HEK293 (cell line): ENCODE measurements at regions of chr2 and their contacts with region 1.

Region 1: GRCh38 chr2:15748736-15749323 is 157.2 kb downstream of the DDX1 start:
- H3K4me3 ChIP-seq: no peak overlapping the region
- H3K27ac ChIP-seq: no peak overlapping the region
- H3K4me1 ChIP-seq: no peaks in the 10 kb centered on the region
- CTCF ChIP-seq: 0 out of 2 replicates have a peak, but pooled peaks have one; percentile 31

Region 2: GRCh38 chr2:15642011-15642814 is 106.6 kb before region 1 on chr2:
- CTCF ChIA-PET with region 1: interaction called, 15 read pairs
- POLR2A ChIA-PET with region 1: no interaction called
- H3K4me3 ChIP-seq: no peak overlapping the region
- H3K27ac ChIP-seq: no peak overlapping the region
- H3K4me1 ChIP-seq: no peaks in the 10 kb centered on the region
- CTCF ChIP-seq: no peak

Region 3: DNA sequence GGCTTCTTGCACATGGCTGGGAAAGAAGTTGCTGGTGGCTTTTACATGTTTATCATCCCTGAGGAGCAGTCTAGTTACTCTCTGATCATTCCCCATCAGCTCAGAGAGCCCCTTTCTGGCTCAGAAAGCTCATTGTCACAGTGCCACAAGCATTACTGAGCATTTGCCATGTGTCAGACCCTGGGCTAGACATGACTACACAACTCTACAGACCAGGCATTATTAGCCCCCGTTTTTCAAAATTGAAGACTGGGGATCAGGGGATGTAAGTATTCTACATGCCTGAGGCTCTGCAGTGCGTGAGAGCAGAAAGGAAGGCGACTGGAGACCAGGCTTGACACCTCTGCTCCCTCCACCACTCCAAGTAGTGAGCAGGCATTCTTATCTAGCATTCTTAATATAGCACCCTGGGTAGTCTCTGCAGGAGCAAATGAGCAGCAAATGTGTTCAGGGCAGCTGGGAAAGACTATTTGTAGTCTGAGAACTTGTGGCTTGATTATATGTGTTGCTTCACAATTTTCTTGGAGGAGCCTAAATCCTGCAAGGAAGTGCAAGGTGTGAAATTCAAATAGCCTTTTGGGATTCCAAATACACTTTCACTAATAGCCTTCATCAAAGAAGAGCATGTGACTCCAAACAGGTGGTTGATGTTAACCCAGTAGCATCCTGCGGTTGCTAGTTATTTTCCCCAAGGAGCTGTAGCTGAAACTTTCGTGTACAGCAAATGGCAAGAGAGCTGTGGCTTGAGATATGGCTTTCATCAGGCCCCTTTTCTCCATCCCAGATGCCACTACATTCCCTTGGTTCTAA is 14.0 kb before region 1 on chr2:
- CTCF ChIA-PET with region 1: interaction called, 11 read pairs
- POLR2A ChIA-PET with region 1: no interaction called
- H3K4me3 ChIP-seq: no peak overlapping the region
- H3K27ac ChIP-seq: no peak overlapping the region
- H3K4me1 ChIP-seq: peaks cover 17% of the 10 kb centered on the region
- CTCF ChIP-seq: no peak